Head of caudate nucleus (tissue), 42 donors: ENCODE measurements at regions of chr19 and their contacts with region 1.

Region 1: DNA sequence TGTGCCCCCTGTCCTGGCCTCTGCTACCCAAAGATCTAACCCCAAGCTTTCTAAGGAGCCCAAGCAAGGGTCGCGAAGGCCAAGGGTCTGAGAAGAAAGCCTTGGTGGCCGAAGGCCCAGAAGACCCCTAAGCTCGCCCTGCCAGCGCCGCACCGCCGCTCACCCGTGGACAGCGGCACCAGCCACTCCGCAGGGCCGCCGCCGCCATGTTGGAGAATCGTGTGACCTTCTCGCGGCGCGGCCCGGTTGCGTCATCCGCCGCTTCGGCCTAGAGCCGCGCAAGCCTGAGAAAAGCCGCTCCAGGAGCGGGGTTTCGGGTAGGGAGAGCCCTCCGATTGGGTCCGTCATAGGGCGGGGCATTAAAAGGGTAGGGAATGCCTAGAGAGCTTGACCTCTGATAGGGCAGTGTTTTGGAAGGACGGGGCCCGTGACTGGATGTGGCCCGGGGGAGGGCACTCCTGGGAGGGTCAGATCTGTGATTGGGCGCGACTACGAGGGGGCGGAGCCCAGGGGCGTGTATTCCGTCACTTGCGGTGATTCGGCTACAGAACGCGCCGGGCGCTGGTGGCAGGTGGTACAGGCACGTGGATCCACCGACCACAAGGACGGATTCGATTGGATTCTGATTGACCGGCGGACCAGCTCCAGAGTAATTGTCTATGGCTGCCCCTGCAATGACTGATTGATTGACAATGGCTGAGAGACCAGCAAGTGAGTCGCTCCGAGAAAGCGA is at the start of gene TIMM44:
- DNase-seq: peak; percentile 98 to 100 (median 100)

Region 2: GRCh38 chr19:7665076-7665475 is 278.5 kb before region 1 on chr19:
- intact Hi-C with region 1: no loop called
- DNase-seq: no peak

Region 3: DNA sequence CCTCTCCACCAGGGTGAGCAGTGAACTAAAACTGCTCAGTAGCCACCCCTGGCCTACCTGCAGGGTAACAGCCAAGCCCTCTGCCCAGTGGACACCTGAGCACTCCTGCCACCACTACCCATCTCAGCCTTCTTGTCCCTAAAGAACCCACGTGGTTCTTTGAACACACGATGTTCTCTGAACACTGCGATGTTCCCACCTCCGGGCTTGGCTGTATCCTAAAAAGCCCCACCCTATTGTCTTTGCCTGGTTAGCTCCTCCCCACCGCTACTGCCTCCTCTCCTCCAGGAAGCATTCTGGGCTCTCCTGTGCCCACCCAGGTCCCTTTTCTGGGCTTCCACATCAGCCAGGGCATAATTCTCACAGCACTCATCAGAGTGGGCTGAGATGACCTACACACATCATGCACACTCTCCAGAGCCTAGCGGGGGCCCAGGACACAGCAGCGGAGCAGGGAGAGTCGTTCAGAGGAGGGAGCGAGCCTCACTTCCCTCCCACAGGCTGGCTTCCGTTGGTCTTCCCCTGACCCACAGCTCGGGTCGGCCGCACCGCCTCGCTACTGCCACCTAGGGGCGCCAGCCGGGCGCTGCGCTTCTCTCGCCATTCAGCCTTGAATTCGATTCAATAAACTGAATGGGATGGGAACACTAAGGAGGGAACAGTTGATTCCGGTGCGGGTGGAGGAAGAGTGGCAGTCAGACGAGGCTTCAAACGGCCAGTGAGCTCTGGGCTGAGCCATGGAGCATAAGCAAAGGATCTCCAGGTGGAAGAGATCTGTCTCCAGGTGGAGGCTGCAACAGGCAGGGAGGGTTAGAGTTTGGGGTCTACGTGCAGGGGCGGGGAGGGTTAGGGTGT is 58.6 kb after region 1 on chr19:
- intact Hi-C with region 1: loop called (anchors 5 kb)
- DNase-seq: peak; percentile 50 to 91 (median 80)